Posterior vena cava (tissue), 2 donors: ENCODE measurements at regions of chr2 and their contacts with region 1.

Region 1: GRCh38 chr2:208175069-208175839 is 11.9 kb upstream of the CRYGA start:
- DNase-seq: peak; percentile 87

Region 2: GRCh38 chr2:208150956-208151355 is 24.3 kb before region 1 on chr2:
- intact Hi-C with region 1: loop called in 1 of 2 experiments (anchors 1 kb)
- DNase-seq: no peak

Region 3: GRCh38 chr2:208254871-208255556 is 79.8 kb after region 1 on chr2 and contains the start of gene IDH1:
- intact Hi-C with region 1: loop called (anchors 10 kb)
- DNase-seq: peak; percentile 99
- total RNA-seq, gene IDH1: 46.8 to 81.8 TPM